ENCODE measurements at regions of chr2 and their contacts with region 1.

Region 1: GRCh38 chr2:36416370-36417165 is 61.0 kb downstream of the CRIM1 start:
- DNase-seq: no peak

Region 2: GRCh38 chr2:36013064-36013463 is 403.5 kb before region 1 on chr2:
- intact Hi-C with region 1: no loop called
- DNase-seq: no peak

Region 3: GRCh38 chr2:36367895-36368353 is 48.6 kb before region 1 on chr2:
- intact Hi-C with region 1: loop called (anchors 2 kb)
- DNase-seq: no peak

Region 4: DNA sequence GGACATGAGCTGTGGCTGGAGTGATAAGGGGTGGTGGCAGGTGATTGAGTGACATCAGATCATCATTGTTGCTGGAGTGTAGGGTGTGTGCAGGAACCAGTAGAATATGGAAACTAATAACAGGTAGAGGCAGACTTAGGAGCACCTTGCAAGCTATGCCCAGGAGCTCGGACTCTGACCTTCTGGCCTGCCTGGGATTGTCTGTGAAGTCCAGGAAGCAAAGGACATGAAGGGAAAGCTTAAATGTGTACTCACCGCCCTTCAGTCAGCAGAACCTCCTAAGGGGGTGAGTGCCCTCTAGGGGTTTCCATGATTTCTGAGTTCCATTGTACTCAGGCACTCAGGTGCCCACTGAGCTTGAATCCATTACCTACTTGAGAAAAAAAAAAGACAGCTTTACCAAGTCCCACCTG is 43.2 kb after region 1 on chr2:
- intact Hi-C with region 1: loop called (anchors 5 kb)
- DNase-seq: no peak

Region 5: DNA sequence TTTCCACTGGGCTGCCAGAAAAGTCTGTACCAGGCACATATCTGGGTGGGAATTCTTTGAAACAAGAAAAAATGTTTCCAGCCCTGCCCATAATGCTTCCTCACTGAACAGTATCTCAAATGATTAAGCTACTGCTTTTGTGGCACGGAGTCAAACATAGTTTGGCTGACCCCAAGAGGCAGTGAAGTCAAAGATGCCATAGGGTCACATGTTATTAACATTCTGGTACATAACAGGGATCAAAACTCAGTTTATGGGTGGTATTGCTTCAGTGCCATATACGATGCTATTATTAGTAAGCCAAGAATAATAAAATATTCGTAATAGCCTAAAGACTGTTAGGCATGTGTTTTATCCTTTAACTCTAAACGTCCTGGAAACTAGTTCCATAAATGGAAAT is 69.0 kb after region 1 on chr2:
- intact Hi-C with region 1: loop called (anchors 2 kb)
- DNase-seq: no peak